Dorsolateral prefrontal cortex (tissue), 120 donors: ENCODE measurements at regions of chr19 and their contacts with region 1.

Region 1: DNA sequence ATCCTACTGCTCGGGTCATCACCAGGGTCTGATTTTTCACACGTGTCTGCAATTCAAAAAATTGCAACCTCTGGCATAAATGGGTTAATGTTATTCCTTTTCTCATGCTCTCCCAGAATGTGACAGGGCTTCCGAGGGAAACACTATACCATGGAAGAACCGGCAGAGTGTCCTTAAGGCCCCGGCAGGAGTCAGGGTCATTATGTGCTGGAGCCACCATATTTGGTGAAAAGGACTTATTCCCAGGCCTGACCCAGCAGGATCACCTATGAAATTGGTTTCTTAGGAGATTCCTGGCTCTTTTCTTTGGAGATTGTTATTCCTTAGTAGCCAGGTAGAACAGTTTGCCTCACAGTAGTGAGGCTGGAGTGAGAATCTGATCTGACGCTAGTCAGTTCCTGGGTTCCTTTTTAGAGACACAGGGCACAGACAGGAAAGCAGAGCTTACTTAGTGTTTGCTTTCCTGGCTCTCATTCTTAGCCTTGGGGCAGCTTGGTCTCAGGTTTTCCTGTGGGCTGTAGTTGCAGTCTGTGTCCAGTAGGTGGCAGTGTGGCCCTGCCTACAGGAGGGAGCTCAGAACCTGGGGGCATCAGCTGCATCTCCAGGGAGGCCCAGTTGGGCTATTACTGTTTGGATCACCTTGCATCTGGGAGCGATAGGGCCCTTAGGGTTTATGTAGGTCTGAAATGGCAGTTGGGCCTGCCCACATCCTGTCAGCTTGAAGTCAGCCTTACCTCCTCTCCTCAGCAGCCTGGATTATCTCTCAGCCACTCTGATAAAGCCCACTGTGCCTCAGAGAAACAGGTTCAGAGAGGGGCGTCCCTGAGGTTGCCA is 12.4 kb downstream of the SNRNP70 start:
- DNase-seq: peak in 9 of 10 donors; percentile 52 to 78 (median 74)
- H3K4me3 ChIP-seq: peak overlapping the region in 1 of 59 donors; percentile 22
- H3K27ac ChIP-seq: peak overlapping the region in 3 of 59 donors; percentile 13 to 48 (median 14)
- H3K27me3 ChIP-seq: no peaks in the 10 kb centered on the region
- CTCF ChIP-seq: peak; percentile 91 to 100 (median 99)

Region 2: GRCh38 chr19:48946463-48947257 is 151.0 kb before region 1 on chr19:
- intact Hi-C with region 1: no loop called
- DNase-seq: no peak
- H3K4me3 ChIP-seq: no peak overlapping the region
- H3K27ac ChIP-seq: no peak overlapping the region
- H3K27me3 ChIP-seq: no peaks in the 10 kb centered on the region
- CTCF ChIP-seq: no peak

Region 3: GRCh38 chr19:49200238-49200862 is 102.7 kb after region 1 on chr19:
- intact Hi-C with region 1: loop called (anchors 5 kb)
- DNase-seq: no peak
- H3K4me3 ChIP-seq: no peak overlapping the region
- H3K27ac ChIP-seq: no peak overlapping the region
- H3K27me3 ChIP-seq: no peaks in the 10 kb centered on the region
- CTCF ChIP-seq: no peak